Gastrocnemius medialis (tissue), 4 donors: ENCODE measurements at regions of chr1 and their contacts with region 1.

Region 1: GRCh38 chr1:232630047-232630893 is at the start of gene SIPA1L2:
- DNase-seq: peak; percentile 86 to 92
- ATAC-seq: peak; percentile 85 to 89
- H3K4me3 ChIP-seq: peak within 1 kb of the TSS; percentile 79 to 94 (median 88)
- H3K27ac ChIP-seq: peak within 1 kb of the TSS; percentile 82 to 93 (median 92)
- H3K4me1 ChIP-seq: peaks cover 9 to 12% of the 10 kb centered on the region in 2 donors
- H3K27me3 ChIP-seq: no peaks in the 10 kb centered on the region
- CTCF ChIP-seq: peak in 4 of 5 experiments; percentile 13 to 53 (median 22)
- POLR2A ChIP-seq: peak; percentile 80 to 87
- total RNA-seq, gene SIPA1L2: 3.1 to 22.7 (median 3.9) TPM

Region 2: GRCh38 chr1:231872461-231872910 is 757.8 kb before region 1 on chr1:
- in situ Hi-C with region 1: loop called in 2 of 4 experiments (anchors 10 to 25 kb)
- intact Hi-C with region 1: loop called (anchors 2 kb)
- DNase-seq: no peak
- ATAC-seq: no peak
- H3K4me3 ChIP-seq: no peak overlapping the region
- H3K27ac ChIP-seq: no peak overlapping the region
- H3K4me1 ChIP-seq: no peaks in the 10 kb centered on the region
- H3K27me3 ChIP-seq: no peaks in the 10 kb centered on the region
- CTCF ChIP-seq: no peak
- POLR2A ChIP-seq: no peak

Region 3: GRCh38 chr1:232538224-232538942 is 91.9 kb before region 1 on chr1:
- in situ Hi-C with region 1: no loop called
- intact Hi-C with region 1: no loop called
- DNase-seq: no peak
- ATAC-seq: no peak
- H3K4me3 ChIP-seq: no peak overlapping the region
- H3K27ac ChIP-seq: no peak overlapping the region
- H3K4me1 ChIP-seq: peaks cover 0 to 15% of the 10 kb centered on the region in 2 donors
- H3K27me3 ChIP-seq: no peaks in the 10 kb centered on the region
- CTCF ChIP-seq: no peak
- POLR2A ChIP-seq: no peak

Region 4: GRCh38 chr1:232553050-232553754 is 77.1 kb before region 1 on chr1:
- in situ Hi-C with region 1: no loop called
- intact Hi-C with region 1: loop called (anchors 5 kb)
- DNase-seq: peak; percentile 28 to 56
- ATAC-seq: peak; percentile 66 to 75
- H3K4me3 ChIP-seq: no peak overlapping the region
- H3K27ac ChIP-seq: peak overlapping the region in 2 of 4 donors; percentile 23 to 27
- H3K4me1 ChIP-seq: peaks cover 30 to 44% of the 10 kb centered on the region in 2 donors
- H3K27me3 ChIP-seq: no peaks in the 10 kb centered on the region
- CTCF ChIP-seq: no peak
- POLR2A ChIP-seq: no peak

Region 5: DNA sequence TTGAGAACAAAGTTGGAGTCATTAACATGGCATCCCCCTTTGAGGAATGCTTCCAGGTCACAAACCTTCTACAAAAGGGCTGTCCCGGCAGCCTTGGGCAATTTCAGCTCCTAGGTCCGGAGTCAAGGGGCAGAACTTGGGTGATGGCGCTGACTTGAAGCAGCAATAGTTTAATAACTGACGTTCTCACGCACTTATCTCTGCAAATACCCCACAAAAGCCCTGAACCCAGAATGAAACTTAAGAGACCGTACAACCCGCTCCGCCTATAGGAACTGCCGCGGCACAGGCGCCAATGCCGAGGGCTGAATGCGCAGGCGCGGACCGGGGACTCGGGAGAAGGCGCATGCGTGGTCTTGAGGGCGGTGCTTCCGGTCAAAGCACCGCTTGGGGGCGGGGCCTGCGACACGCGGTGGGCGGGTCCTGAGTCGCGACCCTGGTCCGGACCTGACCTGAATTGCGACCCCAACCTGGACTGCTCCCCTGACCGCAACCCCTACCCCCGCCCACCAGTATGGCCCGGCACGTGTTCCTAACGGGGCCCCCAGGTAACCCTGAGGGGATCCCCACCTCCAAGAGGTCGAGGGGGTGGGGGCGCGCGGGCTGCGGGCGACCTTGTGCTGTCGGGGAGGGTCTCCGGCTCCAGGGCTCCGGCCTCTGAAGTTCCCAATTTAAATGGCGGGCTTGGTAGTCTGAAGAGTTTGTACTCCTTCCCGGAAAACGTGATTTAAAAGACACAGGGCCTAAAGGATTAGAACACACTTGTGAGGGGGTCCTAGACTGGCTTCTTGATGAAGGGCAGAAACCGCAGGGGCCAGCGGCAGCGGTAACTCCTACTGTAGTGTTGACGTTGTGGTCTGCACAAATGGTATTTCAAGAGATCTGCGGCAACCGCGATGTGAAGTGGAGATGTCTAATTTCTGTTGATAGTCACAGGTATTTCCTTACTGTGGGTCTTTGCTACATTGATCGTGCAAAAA is 320.2 kb after region 1 on chr1 and contains the start of gene NTPCR:
- in situ Hi-C with region 1: loop called in 2 of 4 experiments (anchors 25 kb)
- intact Hi-C with region 1: loop called (anchors 5 kb)
- DNase-seq: peak; percentile 88 to 90
- ATAC-seq: peak; percentile 92 to 95
- H3K4me3 ChIP-seq: peak within 1 kb of the TSS; percentile 77 to 94 (median 88)
- H3K27ac ChIP-seq: peak within 1 kb of the TSS; percentile 88 to 96 (median 92)
- H3K4me1 ChIP-seq: peaks cover 19 to 27% of the 10 kb centered on the region in 2 donors
- H3K27me3 ChIP-seq: no peaks in the 10 kb centered on the region
- CTCF ChIP-seq: peak in 3 of 5 experiments; percentile 6 to 39 (median 16)
- POLR2A ChIP-seq: peak; percentile 37 to 40
- total RNA-seq, gene NTPCR: 20.5 to 33.7 (median 24.2) TPM

Region 6: DNA sequence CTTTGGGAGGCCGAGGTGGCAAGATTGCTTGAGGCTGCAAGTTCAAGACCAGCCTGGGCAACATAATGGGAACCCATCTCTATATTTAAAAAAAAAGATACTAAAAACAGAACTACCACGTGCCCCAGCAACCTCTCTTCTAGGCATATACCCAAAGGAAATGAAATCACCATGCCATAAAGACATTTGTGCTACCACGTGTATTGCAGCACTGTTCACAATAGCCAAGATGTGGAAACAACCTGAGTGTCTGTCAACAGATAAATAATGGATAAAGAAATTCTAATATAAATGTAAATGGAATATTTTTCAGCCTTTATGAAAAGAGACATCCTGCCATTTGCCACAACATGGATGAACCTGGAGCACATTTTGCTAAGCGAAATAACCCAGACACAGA is 536.6 kb after region 1 on chr1:
- in situ Hi-C with region 1: loop called in 1 of 4 experiments (anchors 10 kb)
- intact Hi-C with region 1: loop called (anchors 5 kb)
- DNase-seq: no peak
- ATAC-seq: no peak
- H3K4me3 ChIP-seq: no peak overlapping the region
- H3K27ac ChIP-seq: no peak overlapping the region
- H3K4me1 ChIP-seq: no peaks in the 10 kb centered on the region
- H3K27me3 ChIP-seq: no peaks in the 10 kb centered on the region
- CTCF ChIP-seq: no peak
- POLR2A ChIP-seq: no peak